PC-9 (cell line): ENCODE measurements at regions of chr9 and their contacts with region 1.

Region 1: DNA sequence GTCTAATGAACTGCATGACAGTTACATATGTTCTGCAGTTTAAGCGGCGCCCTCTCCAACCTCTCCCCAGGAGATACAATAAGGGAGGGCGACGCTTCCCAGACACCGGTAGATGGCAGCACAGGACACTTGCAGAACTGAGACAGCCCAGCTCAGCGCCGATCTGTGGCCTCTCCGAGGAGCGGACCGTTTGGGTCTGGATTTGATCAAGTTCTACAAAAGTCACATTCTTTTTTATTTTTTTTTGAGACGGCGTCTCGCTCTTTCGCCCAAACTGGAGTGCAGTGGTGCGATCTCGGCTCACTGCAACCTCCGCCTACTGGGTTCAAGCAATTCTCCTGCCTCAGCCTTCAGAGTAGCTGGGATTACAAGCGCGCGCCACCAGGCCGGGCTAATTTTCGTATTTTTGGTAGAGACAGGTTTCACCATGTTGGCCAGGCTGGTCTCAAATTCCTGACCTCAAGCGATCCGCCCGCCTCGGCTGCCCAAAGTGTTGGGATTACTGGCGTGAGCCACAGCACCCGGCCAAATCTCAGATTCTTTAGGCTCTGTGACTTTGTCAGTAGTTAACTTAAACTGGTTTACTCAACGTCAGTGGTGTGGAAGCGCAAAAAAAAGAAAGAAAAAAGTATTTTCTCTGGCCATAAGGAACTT is 1.4 kb upstream of the ATOSB start:
- DNase-seq: peak; percentile 71
- H3K4me3 ChIP-seq: peak overlapping the region; percentile 69; the same call in 1 of the 2 replicates
- H3K27ac ChIP-seq: no peak overlapping the region
- H3K4me1 ChIP-seq: peaks cover 21% of the 10 kb centered on the region
- H3K27me3 ChIP-seq: no peaks in the 10 kb centered on the region
- CTCF ChIP-seq: peak; percentile 79

Region 2: DNA sequence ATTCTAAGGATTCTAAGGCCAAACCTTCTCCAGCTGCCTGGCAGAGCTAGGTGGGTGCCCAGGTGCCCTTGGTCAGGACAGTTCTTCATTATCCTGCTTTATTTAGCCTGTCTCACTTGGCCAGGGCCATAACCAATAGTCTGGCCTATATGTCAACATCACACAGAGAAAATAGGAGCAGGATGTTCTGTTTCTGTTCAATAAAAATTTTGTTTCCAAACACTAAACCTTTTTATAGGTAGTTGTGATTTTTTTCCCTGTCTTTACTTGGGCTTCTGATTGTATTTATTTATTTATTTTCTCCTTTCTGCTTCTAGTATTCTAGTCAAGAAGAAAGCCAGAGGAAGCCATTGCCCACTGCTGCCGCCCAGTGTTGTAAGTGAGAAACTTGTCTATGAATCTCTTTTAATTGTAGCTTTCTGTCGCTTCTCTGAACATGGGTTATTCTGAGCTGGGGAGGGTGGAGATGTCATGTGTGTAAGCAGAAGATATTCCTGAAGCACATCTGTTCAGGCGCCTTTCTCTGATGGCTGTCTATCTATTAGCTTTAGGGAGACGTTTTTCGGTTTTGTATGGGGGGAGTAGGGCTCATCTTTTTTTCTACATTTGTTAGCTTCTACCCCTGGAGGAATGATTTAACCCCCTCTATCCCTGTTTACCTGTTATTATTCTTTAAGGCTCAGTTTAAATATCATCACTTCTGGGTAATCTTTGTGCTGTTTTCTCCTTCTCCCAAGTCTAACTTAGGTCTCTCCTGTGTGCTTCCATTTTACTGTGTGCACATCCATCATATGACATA is 141.8 kb after region 1 on chr9:
- CTCF ChIA-PET with region 1: interaction called, 4 read pairs
- POLR2A ChIA-PET with region 1: no interaction called
- intact Hi-C with region 1: loop called (anchors 1 kb)
- DNase-seq: peak; percentile 11 to 37
- H3K4me3 ChIP-seq: no peak overlapping the region
- H3K27ac ChIP-seq: no peak overlapping the region
- H3K4me1 ChIP-seq: no peaks in the 10 kb centered on the region
- H3K27me3 ChIP-seq: no peaks in the 10 kb centered on the region
- CTCF ChIP-seq: peak; percentile 68

Region 3: DNA sequence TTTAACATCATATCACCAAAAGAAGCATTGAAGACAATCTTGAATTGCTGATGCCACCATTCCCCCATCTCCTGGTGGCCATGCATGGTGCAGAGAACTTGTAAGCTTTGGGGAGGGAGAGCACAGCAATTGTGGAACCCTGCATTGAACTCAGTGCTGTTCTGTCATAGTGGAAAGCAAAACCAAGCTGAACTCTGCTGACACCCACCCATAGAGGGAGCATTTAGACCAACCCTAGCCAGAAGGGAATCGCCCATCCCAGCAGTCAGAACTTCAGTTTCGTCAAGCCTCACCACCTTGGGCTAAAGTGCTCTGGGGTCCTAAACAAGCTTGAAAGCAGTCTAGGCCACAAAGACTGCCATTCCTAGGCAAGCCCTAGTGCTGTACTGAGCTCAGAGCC is 335.5 kb after region 1 on chr9:
- CTCF ChIA-PET with region 1: no interaction called
- POLR2A ChIA-PET with region 1: interaction called, 15 read pairs
- intact Hi-C with region 1: no loop called
- DNase-seq: no peak
- H3K4me3 ChIP-seq: no peak overlapping the region
- H3K27ac ChIP-seq: no peak overlapping the region
- H3K4me1 ChIP-seq: no peaks in the 10 kb centered on the region
- H3K27me3 ChIP-seq: peaks cover 23% of the 10 kb centered on the region
- CTCF ChIP-seq: no peak

Region 4: GRCh38 chr9:35481347-35481975 is 364.4 kb after region 1 on chr9:
- CTCF ChIA-PET with region 1: no interaction called
- POLR2A ChIA-PET with region 1: no interaction called
- intact Hi-C with region 1: loop called (anchors 1 kb)
- DNase-seq: peak; percentile 50 to 57
- H3K4me3 ChIP-seq: no peak overlapping the region
- H3K27ac ChIP-seq: no peak overlapping the region
- H3K4me1 ChIP-seq: no peaks in the 10 kb centered on the region
- H3K27me3 ChIP-seq: no peaks in the 10 kb centered on the region
- CTCF ChIP-seq: peak; percentile 74

Region 5: GRCh38 chr9:35603987-35604577 is 487.1 kb after region 1 on chr9:
- CTCF ChIA-PET with region 1: no interaction called
- POLR2A ChIA-PET with region 1: no interaction called
- intact Hi-C with region 1: loop called (anchors 10 kb)
- DNase-seq: peak; percentile 94 to 97
- H3K4me3 ChIP-seq: peak overlapping the region; percentile 75
- H3K27ac ChIP-seq: peak overlapping the region; percentile 71
- H3K4me1 ChIP-seq: peaks cover 14% of the 10 kb centered on the region; the same call in 1 of the 2 replicates
- H3K27me3 ChIP-seq: no peaks in the 10 kb centered on the region
- CTCF ChIP-seq: peak; percentile 80